ENCODE measurements at regions of chr20 and their contacts with region 1.

Region 1: DNA sequence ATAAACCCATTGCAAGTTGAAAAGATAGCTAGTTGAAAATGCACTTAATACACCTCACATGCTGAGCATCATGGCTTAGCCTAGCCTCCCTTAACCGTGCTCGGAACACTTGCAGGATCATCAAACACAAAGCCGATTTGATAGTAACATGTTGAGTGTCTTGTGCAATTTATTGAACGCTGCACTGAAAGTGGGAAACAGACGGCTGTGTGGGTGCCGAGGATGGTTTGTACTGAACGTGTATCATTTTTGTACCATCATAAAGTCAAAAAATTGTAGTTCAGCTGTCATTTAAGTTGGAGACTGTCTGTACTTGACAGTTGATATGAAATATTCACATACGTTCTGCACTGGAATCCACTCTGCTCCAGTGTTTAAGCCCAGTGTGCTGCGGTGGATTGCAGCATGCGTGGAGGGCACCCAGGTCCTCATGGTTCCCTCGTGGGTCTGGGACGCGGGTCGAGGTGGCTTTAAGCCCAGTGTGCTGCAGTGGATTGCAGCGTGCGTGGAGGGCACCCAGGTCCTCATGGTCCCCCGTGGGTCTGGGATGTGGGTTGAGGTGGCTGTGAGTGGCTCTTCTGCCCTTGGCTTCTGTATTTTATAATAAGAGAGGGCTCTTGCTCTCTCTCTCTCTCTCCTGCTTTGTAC is 77.0 kb downstream of the CDH4 start:
- DNase-seq: peak; percentile 27
- H3K4me3 Mint-ChIP-seq: no peak overlapping the region
- H3K27ac Mint-ChIP-seq: no peak overlapping the region
- H3K4me1 Mint-ChIP-seq: no peaks in the 10 kb centered on the region
- H3K27me3 Mint-ChIP-seq: no peaks in the 10 kb centered on the region
- CTCF ChIP-seq: no peak

Region 2: DNA sequence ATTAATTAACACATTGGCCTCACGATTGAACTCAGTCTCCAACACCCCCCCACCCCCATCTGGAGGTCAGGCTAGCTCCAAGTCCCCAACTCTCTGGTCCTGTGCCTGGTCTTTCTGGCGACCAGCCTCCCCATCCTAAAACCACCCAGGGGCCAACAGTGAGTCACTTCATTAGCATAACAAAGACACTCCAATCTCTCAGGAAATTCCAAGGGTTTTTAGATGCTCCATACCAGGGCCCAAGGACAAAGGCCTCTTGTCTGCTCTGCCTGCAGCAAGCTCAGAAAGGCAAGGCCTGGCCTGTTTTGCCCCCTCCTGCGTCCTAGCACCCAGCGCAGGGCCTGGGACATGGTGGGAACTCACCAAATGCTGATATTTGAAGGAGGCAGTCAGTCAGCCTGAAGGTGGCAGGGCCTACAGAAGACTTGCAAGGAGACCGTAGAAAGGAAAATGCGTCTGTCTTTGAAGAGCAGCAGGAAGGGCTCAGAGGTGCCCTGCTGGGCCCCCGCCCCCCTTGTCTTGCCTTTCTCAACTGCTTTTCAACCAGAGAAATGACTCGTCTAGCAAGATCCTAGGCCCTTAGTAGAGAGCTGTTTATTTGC is 107.7 kb after region 1 on chr20:
- CTCF ChIA-PET with region 1: no interaction called
- POLR2A ChIA-PET with region 1: no interaction called
- intact Hi-C with region 1: loop called (anchors 10 kb)
- DNase-seq: peak; percentile 86
- H3K4me3 Mint-ChIP-seq: no peak overlapping the region
- H3K27ac Mint-ChIP-seq: peak overlapping the region; percentile 43
- H3K4me1 Mint-ChIP-seq: peaks cover 20% of the 10 kb centered on the region
- H3K27me3 Mint-ChIP-seq: no peaks in the 10 kb centered on the region
- CTCF ChIP-seq: no peak

Region 3: GRCh38 chr20:61584851-61585250 is 255.8 kb after region 1 on chr20:
- CTCF ChIA-PET with region 1: no interaction called
- POLR2A ChIA-PET with region 1: no interaction called
- intact Hi-C with region 1: no loop called
- DNase-seq: no peak
- H3K4me3 Mint-ChIP-seq: no peak overlapping the region
- H3K27ac Mint-ChIP-seq: no peak overlapping the region
- H3K4me1 Mint-ChIP-seq: peaks cover 10% of the 10 kb centered on the region
- H3K27me3 Mint-ChIP-seq: no peaks in the 10 kb centered on the region
- CTCF ChIP-seq: no peak

Region 4: GRCh38 chr20:62808211-62808865 is 1479.3 kb after region 1 on chr20:
- CTCF ChIA-PET with region 1: no interaction called
- POLR2A ChIA-PET with region 1: no interaction called
- intact Hi-C with region 1: no loop called
- DNase-seq: peak; percentile 62
- H3K4me3 Mint-ChIP-seq: no peak overlapping the region
- H3K27ac Mint-ChIP-seq: no peak overlapping the region
- H3K4me1 Mint-ChIP-seq: peaks cover 10% of the 10 kb centered on the region
- H3K27me3 Mint-ChIP-seq: no peaks in the 10 kb centered on the region
- CTCF ChIP-seq: peak; percentile 90